GM12878 (cell line): ENCODE measurements at regions of chr1 and their contacts with region 1.

Region 1: DNA sequence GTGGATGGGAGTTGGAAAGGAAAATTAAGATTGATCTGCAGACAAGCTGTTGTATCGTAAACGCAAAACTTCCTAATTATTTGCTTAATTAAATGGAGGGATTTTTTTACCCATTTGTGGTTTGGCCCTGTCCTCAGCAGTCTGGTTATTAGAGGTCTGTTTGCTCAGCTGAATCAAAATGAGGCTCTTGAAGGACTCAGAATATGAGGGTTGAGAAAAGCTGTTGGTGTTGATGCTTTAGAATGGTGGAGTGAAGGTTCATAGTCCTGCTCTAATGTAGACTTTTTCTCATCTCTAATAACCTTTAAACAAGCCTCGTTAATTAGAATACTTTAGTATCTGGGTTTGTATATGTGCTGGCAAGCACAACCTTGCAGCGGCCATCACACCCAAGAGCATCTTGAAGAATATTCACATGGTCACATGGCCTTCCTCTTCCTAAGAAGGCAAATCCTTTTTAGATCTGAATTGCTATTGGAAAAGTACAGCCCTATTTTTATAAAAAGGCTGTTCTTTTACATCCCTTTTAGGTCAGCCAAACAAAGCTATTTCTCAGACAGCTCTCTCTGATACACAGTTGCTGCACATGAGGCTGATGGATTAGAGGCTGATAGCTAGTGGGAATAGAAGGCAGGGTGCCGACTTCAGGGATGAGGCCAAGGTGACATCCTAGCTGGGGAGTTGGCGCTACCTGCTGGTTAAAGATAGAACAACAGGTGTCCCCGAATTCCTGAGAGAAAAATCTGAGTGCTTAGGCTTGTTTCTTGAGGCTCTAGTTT is 53.8 kb downstream of the MACF1 start:
- DNase-seq: no peak
- ATAC-seq: peak; percentile 69
- H3K4me3 ChIP-seq: no peak overlapping the region
- H3K27ac ChIP-seq: no peak overlapping the region
- H3K4me1 ChIP-seq: peaks cover 27% of the 10 kb centered on the region
- H3K27me3 ChIP-seq: no peaks in the 10 kb centered on the region
- CTCF ChIP-seq: peak; percentile 81 to 90 (median 85)
- EP300 ChIP-seq: no peak
- POLR2A ChIP-seq: no peak
- RAD21 ChIP-seq: peak; percentile 90

Region 2: GRCh38 chr1:39105061-39105840 is 153.1 kb before region 1 on chr1:
- CTCF ChIA-PET with region 1: interaction called, 88 read pairs
- POLR2A ChIA-PET with region 1: no interaction called
- RAD21 ChIA-PET with region 1: interaction called, 15 read pairs
- SMC1A ChIA-PET with region 1: interaction called, 52 read pairs
- in situ Hi-C with region 1: no loop called
- intact Hi-C with region 1: loop called (anchors 1 kb)
- DNase-seq: no peak
- ATAC-seq: peak; percentile 51
- H3K4me3 ChIP-seq: peak overlapping the region; percentile 94
- H3K27ac ChIP-seq: peak overlapping the region; percentile 67
- H3K4me1 ChIP-seq: peaks cover 40% of the 10 kb centered on the region
- H3K27me3 ChIP-seq: no peaks in the 10 kb centered on the region
- CTCF ChIP-seq: no peak
- EP300 ChIP-seq: no peak
- POLR2A ChIP-seq: peak; percentile 75
- RAD21 ChIP-seq: no peak

Region 3: GRCh38 chr1:39132505-39133339 is 125.6 kb before region 1 on chr1:
- CTCF ChIA-PET with region 1: interaction called, 14 read pairs
- POLR2A ChIA-PET with region 1: no interaction called
- RAD21 ChIA-PET with region 1: interaction called, 3 read pairs
- SMC1A ChIA-PET with region 1: interaction called, 7 read pairs
- in situ Hi-C with region 1: no loop called
- intact Hi-C with region 1: no loop called
- DNase-seq: no peak
- ATAC-seq: no peak
- H3K4me3 ChIP-seq: no peak overlapping the region
- H3K27ac ChIP-seq: no peak overlapping the region
- H3K4me1 ChIP-seq: no peaks in the 10 kb centered on the region
- H3K27me3 ChIP-seq: no peaks in the 10 kb centered on the region
- CTCF ChIP-seq: no peak
- EP300 ChIP-seq: no peak
- POLR2A ChIP-seq: no peak
- RAD21 ChIP-seq: no peak

Region 4: GRCh38 chr1:39204441-39205081 is 53.8 kb before region 1 on chr1 and contains the start of gene MACF1:
- CTCF ChIA-PET with region 1: interaction called, 25 read pairs
- POLR2A ChIA-PET with region 1: interaction called, 3 read pairs
- RAD21 ChIA-PET with region 1: interaction called, 7 read pairs
- SMC1A ChIA-PET with region 1: interaction called, 40 read pairs
- in situ Hi-C with region 1: no loop called
- intact Hi-C with region 1: no loop called
- DNase-seq: no peak
- ATAC-seq: peak; percentile 70
- H3K4me3 ChIP-seq: peak within 1 kb of the TSS; percentile 67
- H3K27ac ChIP-seq: peak within 1 kb of the TSS; percentile 83
- H3K4me1 ChIP-seq: peaks cover 12% of the 10 kb centered on the region
- H3K27me3 ChIP-seq: no peaks in the 10 kb centered on the region
- CTCF ChIP-seq: no peak; a peak in 1 of 6 replicates
- EP300 ChIP-seq: no peak
- POLR2A ChIP-seq: no peak
- RAD21 ChIP-seq: 0 out of 2 replicates have a peak, but pooled peaks have one; percentile 15
- polyA plus RNA-seq, gene MACF1: 15.5 to 25.1 TPM

Region 5: GRCh38 chr1:39220891-39221870 is 37.2 kb before region 1 on chr1:
- CTCF ChIA-PET with region 1: interaction called, 37 read pairs
- POLR2A ChIA-PET with region 1: interaction called, 5 read pairs
- RAD21 ChIA-PET with region 1: interaction called, 59 read pairs
- SMC1A ChIA-PET with region 1: interaction called, 52 read pairs
- in situ Hi-C with region 1: no loop called
- intact Hi-C with region 1: no loop called
- DNase-seq: no peak
- ATAC-seq: no peak
- H3K4me3 ChIP-seq: no peak overlapping the region
- H3K27ac ChIP-seq: no peak overlapping the region; the same call in 1 of the 2 replicates
- H3K4me1 ChIP-seq: peaks cover 2% of the 10 kb centered on the region; the same call in 1 of the 2 replicates
- H3K27me3 ChIP-seq: no peaks in the 10 kb centered on the region
- CTCF ChIP-seq: no peak
- EP300 ChIP-seq: no peak
- POLR2A ChIP-seq: no peak
- RAD21 ChIP-seq: no peak

Region 6: GRCh38 chr1:39275836-39276507 is 17.6 kb after region 1 on chr1:
- CTCF ChIA-PET with region 1: interaction called, 58 read pairs
- POLR2A ChIA-PET with region 1: no interaction called
- RAD21 ChIA-PET with region 1: interaction called, 12 read pairs
- SMC1A ChIA-PET with region 1: interaction called, 9 read pairs
- in situ Hi-C with region 1: no loop called
- intact Hi-C with region 1: no loop called
- DNase-seq: no peak
- ATAC-seq: no peak
- H3K4me3 ChIP-seq: no peak overlapping the region
- H3K27ac ChIP-seq: no peak overlapping the region
- H3K4me1 ChIP-seq: peaks cover 21% of the 10 kb centered on the region
- H3K27me3 ChIP-seq: no peaks in the 10 kb centered on the region
- CTCF ChIP-seq: no peak
- EP300 ChIP-seq: no peak
- POLR2A ChIP-seq: no peak
- RAD21 ChIP-seq: no peak